Activated T-helper 2 cell treated with anti-CD3 and anti-CD28 coated beads, Interferon-gamma antibody, Interleukin-2, Interleukin-4, amounts not matched to agents 10 μg/mL and 5 μg/mL and 100 μg/mL, durations not matched to agents 14 hours and 24 hours and 36 hours (primary cell): ENCODE measurements at regions of chr3 and their contacts with region 1.

Region 1: DNA sequence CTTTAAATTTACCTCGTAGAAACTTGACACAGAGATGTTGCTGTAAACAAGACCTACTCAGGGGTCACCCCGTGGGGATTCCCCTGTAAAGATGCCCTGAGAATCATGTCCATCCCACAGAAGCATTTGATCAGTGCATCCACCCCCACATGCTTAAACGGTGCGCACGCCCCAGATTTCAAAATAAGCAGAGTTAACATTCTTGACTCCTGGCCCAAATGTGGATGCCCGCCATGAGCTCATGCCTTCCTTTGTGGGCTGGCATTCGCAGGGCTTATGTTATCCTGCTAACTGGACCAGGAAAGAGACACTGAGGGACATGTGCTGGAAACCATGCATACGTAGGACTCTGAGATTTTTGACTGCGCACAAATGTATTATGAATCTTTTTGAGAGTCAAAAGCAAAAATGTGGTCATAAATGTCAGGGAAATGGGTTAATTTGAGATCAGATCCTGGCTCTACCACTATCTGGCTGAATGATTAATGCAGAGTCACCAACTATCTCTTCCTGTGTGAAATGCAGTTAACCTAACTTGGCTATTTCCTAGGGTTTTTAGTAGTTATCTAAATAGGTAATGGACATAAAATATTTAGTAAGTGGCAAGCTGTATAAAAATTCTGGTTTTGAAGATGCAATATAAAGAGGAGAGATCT is 9.1 kb upstream of the TP63 start:
- DNase-seq: no peak
- H3K4me3 Mint-ChIP-seq: peak overlapping the region; percentile 37
- H3K27ac Mint-ChIP-seq: peak overlapping the region; percentile 90
- H3K4me1 Mint-ChIP-seq: peaks cover 47% of the 10 kb centered on the region
- H3K27me3 Mint-ChIP-seq: no peaks in the 10 kb centered on the region

Region 2: GRCh38 chr3:189233225-189233858 is 388.7 kb before region 1 on chr3:
- intact Hi-C with region 1: loop called (anchors 2 kb)
- DNase-seq: no peak
- H3K4me3 Mint-ChIP-seq: no peak overlapping the region
- H3K27ac Mint-ChIP-seq: no peak overlapping the region
- H3K4me1 Mint-ChIP-seq: peaks cover 48% of the 10 kb centered on the region
- H3K27me3 Mint-ChIP-seq: peaks cover 18% of the 10 kb centered on the region

Region 3: GRCh38 chr3:189334064-189334920 is 287.8 kb before region 1 on chr3:
- intact Hi-C with region 1: loop called (anchors 2 kb)
- DNase-seq: no peak
- H3K4me3 Mint-ChIP-seq: no peak overlapping the region
- H3K27ac Mint-ChIP-seq: peak overlapping the region; percentile 68
- H3K4me1 Mint-ChIP-seq: peaks cover 58% of the 10 kb centered on the region
- H3K27me3 Mint-ChIP-seq: no peaks in the 10 kb centered on the region

Region 4: GRCh38 chr3:189502676-189503257 is 119.3 kb before region 1 on chr3:
- intact Hi-C with region 1: loop called (anchors 2 kb)
- DNase-seq: no peak
- H3K4me3 Mint-ChIP-seq: no peak overlapping the region
- H3K27ac Mint-ChIP-seq: peak overlapping the region; percentile 30
- H3K4me1 Mint-ChIP-seq: peaks cover 41% of the 10 kb centered on the region
- H3K27me3 Mint-ChIP-seq: no peaks in the 10 kb centered on the region

Region 5: DNA sequence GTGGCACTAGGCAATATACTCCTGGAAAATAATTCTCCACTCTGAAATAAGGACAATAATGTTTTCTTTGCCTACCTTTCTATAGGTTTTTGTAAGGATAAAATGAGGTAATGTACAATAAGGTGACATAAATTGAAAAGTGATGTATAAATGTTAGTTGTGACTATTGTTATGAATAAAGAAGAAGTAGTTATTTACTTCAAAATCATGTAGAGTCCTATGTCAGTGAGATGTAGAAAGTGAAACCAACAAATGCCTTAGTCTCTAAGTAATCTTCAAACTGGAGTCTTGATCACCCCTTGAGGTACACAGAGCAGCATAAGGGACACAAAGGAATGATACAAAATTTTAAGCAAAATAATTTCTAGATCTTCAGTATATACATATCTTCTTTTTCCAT is 51.2 kb before region 1 on chr3:
- intact Hi-C with region 1: loop called (anchors 2 kb)
- DNase-seq: no peak
- H3K4me3 Mint-ChIP-seq: peak overlapping the region; percentile 9
- H3K27ac Mint-ChIP-seq: peak overlapping the region; percentile 20
- H3K4me1 Mint-ChIP-seq: peaks cover 70% of the 10 kb centered on the region
- H3K27me3 Mint-ChIP-seq: no peaks in the 10 kb centered on the region

Region 6: DNA sequence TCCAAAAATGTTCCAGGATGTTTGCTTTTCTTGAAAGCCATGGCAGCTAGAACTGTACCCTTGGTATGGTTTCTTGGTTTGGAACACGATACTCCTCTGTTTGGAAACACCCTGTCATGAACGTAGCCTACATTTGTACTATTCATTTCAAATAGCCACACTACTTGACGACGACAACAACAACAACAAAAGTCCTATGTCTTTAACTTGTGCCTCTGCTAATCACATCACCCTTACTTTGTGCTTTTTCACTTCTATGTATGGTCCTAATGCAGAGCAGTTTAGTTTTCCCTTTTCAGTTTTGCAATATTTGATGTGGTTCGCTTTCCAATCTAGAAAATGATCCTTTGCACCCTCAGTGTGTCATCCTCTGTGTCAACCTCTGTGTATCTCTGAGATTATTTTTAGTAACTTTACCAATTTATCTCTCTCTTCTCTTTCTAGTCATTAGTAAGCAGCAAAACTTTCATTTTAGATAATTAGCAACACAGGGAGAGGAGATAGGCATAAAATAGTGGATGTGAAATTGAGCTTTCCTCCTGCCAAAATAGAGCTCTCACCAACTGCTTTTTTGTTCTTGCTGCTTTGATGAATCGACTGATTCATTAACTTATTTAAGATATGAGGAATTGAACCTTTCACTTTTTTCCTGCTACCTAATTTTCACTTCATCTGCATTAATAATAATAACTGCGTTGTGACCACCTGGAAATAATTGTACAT is 35.0 kb before region 1 on chr3:
- intact Hi-C with region 1: loop called (anchors 1 kb)
- DNase-seq: no peak
- H3K4me3 Mint-ChIP-seq: no peak overlapping the region
- H3K27ac Mint-ChIP-seq: peak overlapping the region; percentile 64
- H3K4me1 Mint-ChIP-seq: peaks cover 28% of the 10 kb centered on the region
- H3K27me3 Mint-ChIP-seq: peaks cover 2% of the 10 kb centered on the region

Region 7: DNA sequence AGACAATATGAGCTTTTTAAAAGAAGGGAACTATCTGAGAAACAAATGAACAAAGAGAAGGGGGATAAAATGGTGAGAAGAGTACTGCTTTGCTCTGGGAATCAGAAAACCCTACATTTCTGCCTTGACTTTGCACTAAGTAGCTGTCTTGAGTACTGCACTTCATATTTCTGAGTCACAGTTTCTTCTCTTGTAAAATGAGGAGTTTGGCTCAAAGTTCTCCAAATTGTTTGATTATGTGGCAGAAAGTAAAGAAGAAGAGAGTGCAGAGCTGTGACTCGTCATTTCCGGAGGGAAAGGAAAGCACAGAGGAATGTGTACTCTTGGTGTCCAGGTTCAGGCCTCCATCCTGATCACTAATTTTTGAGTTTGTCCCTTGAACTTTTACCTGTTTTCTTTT is 63.8 kb after region 1 on chr3:
- intact Hi-C with region 1: loop called (anchors 2 kb)
- DNase-seq: no peak
- H3K4me3 Mint-ChIP-seq: no peak overlapping the region
- H3K27ac Mint-ChIP-seq: peak overlapping the region; percentile 51
- H3K4me1 Mint-ChIP-seq: peaks cover 43% of the 10 kb centered on the region
- H3K27me3 Mint-ChIP-seq: no peaks in the 10 kb centered on the region